GM18951 (cell line): ENCODE measurements at regions of chr3 and their contacts with region 1.

Region 1: GRCh38 chr3:16600780-16601539 is 4.3 kb downstream of the DAZL start:
- POLR2A ChIP-seq: no peak

Region 2: GRCh38 chr3:16064642-16065414 is 536.1 kb before region 1 on chr3:
- in situ Hi-C with region 1: no loop called
- POLR2A ChIP-seq: no peak

Region 3: DNA sequence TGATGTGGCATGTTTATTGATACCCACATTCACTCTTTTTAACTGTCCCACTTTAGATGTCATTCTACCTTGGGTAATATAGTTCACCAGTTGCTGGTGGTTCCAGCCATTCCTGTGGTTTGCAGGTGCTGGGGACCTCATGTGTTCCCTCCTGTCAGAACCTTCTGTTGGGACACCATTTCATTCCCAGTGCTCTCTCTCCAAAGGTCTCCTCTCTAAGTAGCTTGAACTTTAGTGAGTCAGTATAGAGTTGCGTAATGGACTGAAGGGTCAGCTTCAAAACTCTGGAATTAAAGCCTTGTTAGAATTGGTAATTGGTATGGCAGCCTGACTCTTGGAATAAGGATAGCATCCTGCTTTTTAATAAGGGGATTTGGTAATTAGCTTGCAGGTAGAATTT is 392.3 kb after region 1 on chr3:
- in situ Hi-C with region 1: no loop called
- POLR2A ChIP-seq: no peak

Region 4: DNA sequence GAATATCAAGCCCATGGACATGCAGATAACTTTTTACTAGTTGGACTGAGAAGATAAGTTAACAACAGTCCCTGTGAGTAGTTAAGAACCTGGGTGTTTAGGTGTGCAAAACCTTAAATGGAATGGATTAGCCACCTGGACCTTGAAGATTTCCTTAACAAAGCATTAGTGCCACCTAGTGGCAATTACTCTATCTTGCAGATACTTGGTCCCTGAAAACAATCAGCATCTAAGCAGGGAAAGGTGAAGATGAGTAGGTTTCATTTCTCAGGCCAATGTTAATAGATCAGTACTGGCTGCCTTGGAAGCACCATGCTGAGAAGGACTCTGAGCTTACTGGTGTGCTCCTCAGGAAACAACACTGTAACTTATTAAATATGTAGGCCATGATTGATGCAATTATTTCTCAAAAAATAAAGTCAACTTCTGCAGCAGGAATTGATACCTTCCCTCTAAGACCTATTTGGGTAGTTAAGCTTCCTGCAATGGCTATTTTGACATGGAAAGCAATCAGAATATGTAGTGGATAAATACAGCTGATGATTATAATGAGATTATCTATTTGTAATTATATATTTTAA is 812.1 kb after region 1 on chr3:
- in situ Hi-C with region 1: loop called (anchors 25 kb)
- POLR2A ChIP-seq: no peak

Region 5: DNA sequence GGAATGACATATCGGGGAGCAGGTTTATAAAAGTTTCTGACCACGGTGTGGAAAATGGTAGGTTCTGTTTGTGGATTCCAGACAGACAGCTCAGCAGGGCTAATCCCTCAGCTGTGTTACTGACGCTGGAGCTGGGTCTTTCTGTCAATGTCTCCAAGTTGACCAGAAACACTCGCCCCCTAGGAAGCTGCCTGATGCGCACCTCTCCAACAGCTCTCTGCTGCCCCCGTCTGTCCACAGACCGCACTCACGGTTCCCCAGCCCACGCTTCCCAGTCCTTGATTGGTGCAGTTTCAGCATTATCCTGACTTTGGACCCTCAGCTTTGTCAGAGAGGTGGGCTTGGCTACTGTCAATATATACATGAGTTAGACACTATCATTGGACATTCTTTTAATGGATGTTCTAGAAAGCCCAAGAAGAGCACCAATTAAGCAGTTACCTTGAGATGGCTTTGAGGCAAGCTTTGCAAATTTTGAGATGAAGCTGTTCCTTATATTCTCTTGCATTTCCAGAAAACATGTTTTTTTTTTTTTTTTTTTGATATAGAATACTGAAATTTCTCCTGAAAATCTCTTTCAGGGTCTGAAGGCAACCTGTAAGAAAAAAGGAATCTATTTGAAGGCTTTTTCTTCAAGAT is 1240.3 kb after region 1 on chr3:
- in situ Hi-C with region 1: loop called (anchors 25 kb)
- POLR2A ChIP-seq: no peak